GM10248 (cell line): ENCODE measurements at regions of chr20 and their contacts with region 1.

Region 1: DNA sequence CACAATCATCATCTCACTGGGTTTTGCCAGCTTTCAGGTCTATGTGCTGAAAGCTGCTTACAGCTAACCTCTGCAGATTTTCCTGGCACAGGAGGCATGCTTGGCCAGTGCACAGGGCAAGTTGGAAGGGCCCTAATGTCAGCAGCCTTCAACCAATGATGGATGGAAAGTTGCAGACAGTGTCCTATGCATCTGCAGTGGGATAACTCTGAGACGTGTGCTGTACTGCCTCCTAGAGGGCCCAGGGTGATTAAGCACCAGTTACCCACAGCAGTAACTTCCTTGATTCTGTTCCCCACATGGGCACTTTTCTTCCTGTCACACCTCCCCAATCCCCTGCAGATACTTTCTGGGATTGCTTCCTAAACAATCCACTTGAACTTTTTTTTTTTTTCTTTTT is 38.6 kb downstream of the OVOL2 start:
- DNase-seq: peak; percentile 74
- CTCF ChIP-seq: peak; percentile 64

Region 2: GRCh38 chr20:18005231-18006109 is 13.6 kb before region 1 on chr20:
- CTCF ChIA-PET with region 1: interaction called, 10 read pairs
- POLR2A ChIA-PET with region 1: no interaction called
- DNase-seq: peak; percentile 81
- CTCF ChIP-seq: no peak

Region 3: GRCh38 chr20:18137412-18138265 is 118.6 kb after region 1 on chr20 and contains the starts of genes KAT14 and PET117:
- CTCF ChIA-PET with region 1: no interaction called
- POLR2A ChIA-PET with region 1: no interaction called
- DNase-seq: peak; percentile 90
- CTCF ChIP-seq: no peak